Mammary epithelial cell (primary cell): ENCODE measurements at regions of chr1 and their contacts with region 1.

Region 1: GRCh38 chr1:95061445-95062006 is 11.2 kb downstream of the ALG14 start:
- DNase-seq: no peak
- H3K4me3 ChIP-seq: no peak overlapping the region
- H3K27ac ChIP-seq: no peak overlapping the region
- H3K4me1 ChIP-seq: no peaks in the 10 kb centered on the region
- H3K27me3 ChIP-seq: no peaks in the 10 kb centered on the region
- CTCF ChIP-seq: no peak

Region 2: GRCh38 chr1:94962409-94963265 is 98.9 kb before region 1 on chr1:
- CTCF ChIA-PET with region 1: no interaction called
- dilution Hi-C with region 1: no loop called
- in situ Hi-C with region 1: no loop called
- intact Hi-C with region 1: no loop called
- DNase-seq: no peak
- H3K4me3 ChIP-seq: no peak overlapping the region
- H3K27ac ChIP-seq: no peak overlapping the region
- H3K4me1 ChIP-seq: no peaks in the 10 kb centered on the region
- H3K27me3 ChIP-seq: no peaks in the 10 kb centered on the region
- CTCF ChIP-seq: no peak

Region 3: GRCh38 chr1:95154096-95154495 is 92.6 kb after region 1 on chr1:
- CTCF ChIA-PET with region 1: no interaction called
- dilution Hi-C with region 1: loop called (anchors 5 kb)
- in situ Hi-C with region 1: no loop called
- intact Hi-C with region 1: no loop called
- DNase-seq: no peak
- H3K4me3 ChIP-seq: no peak overlapping the region
- H3K27ac ChIP-seq: no peak overlapping the region
- H3K4me1 ChIP-seq: no peaks in the 10 kb centered on the region
- H3K27me3 ChIP-seq: no peaks in the 10 kb centered on the region
- CTCF ChIP-seq: no peak